Activated CD4-positive, alpha-beta T cell treated with anti-CD3 and anti-CD28 coated beads for 36 hours (primary cell): ENCODE measurements at regions of chr6 and their contacts with region 1.

Region 1: DNA sequence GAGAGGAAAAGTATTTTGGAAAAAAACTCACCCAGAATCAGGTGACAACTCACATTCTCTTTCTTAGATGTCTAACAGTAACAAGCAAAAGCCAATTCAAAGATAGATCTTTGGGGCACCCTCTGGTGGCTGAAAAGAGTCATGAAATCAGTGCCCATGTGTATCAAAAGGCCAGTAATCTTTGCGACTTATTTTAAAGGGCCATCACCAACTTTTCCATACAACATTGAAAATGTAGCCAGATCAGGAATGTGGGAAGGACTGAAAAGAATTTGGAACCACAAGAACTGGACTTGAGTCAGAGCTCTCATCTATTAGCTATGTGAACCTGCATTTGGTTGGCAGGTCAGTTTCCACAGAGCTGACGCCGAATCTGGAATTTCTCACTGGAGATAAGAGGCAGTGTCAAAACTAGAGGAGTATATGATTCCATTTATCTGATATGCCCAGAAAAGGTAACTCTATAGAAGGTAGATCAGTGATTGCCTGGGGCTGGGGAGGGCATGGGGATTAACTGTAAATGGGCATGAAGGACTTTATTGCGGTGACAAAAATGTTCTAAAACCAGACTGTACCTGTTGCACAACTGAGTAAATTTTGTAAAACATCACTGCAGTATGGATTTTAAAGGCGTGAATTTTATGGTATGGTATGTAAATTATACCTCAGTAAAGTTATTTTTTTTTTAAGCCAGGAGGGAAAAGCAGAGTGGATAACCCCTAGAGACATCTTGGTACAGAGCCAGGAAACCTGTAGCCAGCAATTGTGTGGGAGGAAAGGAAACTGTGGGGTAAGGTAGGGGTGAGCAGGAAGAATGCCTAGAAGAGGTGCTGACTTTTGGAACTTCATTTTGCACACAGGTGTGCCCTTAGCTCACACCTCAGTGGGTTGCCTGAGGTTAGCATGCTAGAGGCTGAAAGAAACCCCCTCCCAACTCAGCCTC is 117.1 kb upstream of the ASF1A start:
- DNase-seq: peak; percentile 78
- ATAC-seq: peak; percentile 92
- H3K4me3 Mint-ChIP-seq: no peak overlapping the region
- H3K27ac Mint-ChIP-seq: peak overlapping the region; percentile 10
- H3K4me1 Mint-ChIP-seq: peaks cover 22% of the 10 kb centered on the region
- H3K27me3 Mint-ChIP-seq: no peaks in the 10 kb centered on the region

Region 2: DNA sequence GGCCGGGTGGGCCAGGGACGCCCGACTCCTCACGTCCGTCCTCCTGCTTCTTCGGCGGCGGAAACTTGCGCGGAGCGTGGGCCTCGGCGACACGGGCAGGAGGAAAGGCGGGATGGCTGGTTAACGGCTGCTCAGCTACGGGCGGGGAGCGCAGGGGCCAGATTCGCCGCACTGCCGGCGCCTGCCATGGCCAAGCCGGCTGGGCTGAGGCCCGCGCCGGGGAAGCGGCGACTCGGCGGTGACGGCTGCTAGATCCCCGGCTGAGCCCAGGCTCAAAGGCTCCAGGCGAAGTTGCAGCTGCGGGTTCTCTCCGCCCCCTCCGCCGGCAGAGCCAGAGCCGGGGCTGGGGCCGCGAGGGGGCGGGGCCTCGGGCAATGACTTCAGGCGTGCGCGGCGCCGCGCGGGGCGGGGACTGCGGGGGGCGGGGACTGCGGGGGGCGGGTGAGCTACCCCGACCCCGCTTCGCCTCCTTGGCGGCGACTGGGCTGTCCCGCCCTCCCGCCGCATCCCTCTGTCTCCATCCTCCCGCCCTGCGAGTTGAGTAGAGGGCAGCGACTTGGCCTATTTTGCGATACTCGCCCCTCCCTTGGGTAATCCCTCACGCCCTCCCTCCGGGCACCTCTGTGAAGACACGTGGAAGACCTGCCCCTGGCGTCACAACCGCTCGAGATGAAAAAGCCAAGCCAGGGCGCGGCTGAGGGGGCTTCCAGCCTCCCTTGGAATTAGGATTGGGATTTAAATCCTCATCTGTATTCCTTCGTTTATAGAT is 125.4 kb before region 1 on chr6 and contains the start of gene CEP85L:
- CTCF ChIA-PET with region 1: interaction called, 3 read pairs
- POLR2A ChIA-PET with region 1: no interaction called
- intact Hi-C with region 1: loop called (anchors 1 kb)
- DNase-seq: peak; percentile 96
- ATAC-seq: peak; percentile 93
- H3K4me3 Mint-ChIP-seq: peak within 1 kb of the TSS; percentile 85
- H3K27ac Mint-ChIP-seq: peak within 1 kb of the TSS; percentile 94
- H3K4me1 Mint-ChIP-seq: peaks cover 50% of the 10 kb centered on the region
- H3K27me3 Mint-ChIP-seq: no peaks in the 10 kb centered on the region
- total RNA-seq, gene CEP85L: 29.5 to 29.7 TPM

Region 3: GRCh38 chr6:118724211-118724610 is 52.7 kb before region 1 on chr6:
- CTCF ChIA-PET with region 1: interaction called, 3 read pairs
- POLR2A ChIA-PET with region 1: no interaction called
- intact Hi-C with region 1: loop called (anchors 2 kb)
- DNase-seq: no peak
- ATAC-seq: peak; percentile 37
- H3K4me3 Mint-ChIP-seq: no peak overlapping the region
- H3K27ac Mint-ChIP-seq: peak overlapping the region; percentile 70
- H3K4me1 Mint-ChIP-seq: peaks cover 75% of the 10 kb centered on the region
- H3K27me3 Mint-ChIP-seq: no peaks in the 10 kb centered on the region

Region 4: DNA sequence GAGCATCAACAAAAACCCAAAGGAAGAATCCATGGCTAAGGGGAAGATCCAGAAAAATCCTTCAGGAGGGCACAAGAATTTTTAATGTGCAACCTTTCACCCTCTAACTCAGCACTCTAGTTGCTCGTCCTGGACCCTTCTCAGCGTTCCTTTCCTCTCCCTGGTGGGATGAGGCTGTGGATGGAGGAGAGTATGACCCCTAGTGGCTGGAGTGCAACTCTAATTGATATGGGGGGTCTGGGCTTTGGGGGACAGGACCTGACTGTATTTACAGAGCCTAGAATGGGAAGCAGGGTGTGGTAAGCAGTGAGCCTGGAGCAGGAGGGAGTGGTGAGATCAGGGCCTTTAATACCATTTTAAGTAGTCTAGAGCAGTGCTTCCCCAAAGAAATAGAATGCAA is 41.6 kb before region 1 on chr6:
- CTCF ChIA-PET with region 1: interaction called, 4 read pairs
- POLR2A ChIA-PET with region 1: no interaction called
- intact Hi-C with region 1: loop called in 1 of 2 experiments (anchors 2 kb)
- DNase-seq: no peak
- ATAC-seq: no peak
- H3K4me3 Mint-ChIP-seq: no peak overlapping the region
- H3K27ac Mint-ChIP-seq: peak overlapping the region; percentile 52
- H3K4me1 Mint-ChIP-seq: peaks cover 26% of the 10 kb centered on the region
- H3K27me3 Mint-ChIP-seq: no peaks in the 10 kb centered on the region

Region 5: DNA sequence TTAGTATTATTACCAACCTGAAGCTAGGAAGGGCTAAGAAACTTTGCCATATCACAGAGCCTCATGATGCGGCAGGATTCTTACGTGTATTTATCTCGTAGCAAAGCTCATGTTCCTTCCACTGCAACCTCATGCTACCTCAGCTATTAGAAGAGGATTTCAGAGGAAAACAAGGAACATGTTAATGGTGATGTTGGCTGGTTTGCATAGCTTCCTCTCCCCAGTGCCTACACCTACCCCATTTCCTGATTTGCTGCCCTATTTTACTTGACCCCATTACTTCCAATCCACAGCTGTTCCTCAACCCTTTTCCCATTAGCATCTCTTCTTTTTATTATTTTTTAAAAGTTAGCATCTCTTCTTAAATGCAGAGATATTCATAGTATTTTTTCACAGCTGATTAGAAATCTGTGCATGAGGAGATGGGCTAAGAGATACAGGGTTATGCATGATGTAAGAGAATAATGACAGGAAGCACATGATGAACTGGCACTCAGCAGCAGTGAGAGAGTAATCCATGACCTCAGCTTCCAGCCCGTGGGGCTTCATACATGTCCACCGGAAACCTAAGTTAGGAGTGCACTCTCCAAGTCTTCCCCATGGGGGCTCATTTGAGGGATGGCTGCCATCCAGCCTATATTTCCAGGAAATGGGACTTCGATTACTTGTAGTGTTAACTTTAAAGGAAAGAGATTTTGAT is 11.0 kb after region 1 on chr6:
- CTCF ChIA-PET with region 1: interaction called, 13 read pairs
- POLR2A ChIA-PET with region 1: no interaction called
- intact Hi-C with region 1: no loop called
- DNase-seq: no peak
- ATAC-seq: peak; percentile 40
- H3K4me3 Mint-ChIP-seq: no peak overlapping the region
- H3K27ac Mint-ChIP-seq: peak overlapping the region; percentile 51
- H3K4me1 Mint-ChIP-seq: peaks cover 35% of the 10 kb centered on the region
- H3K27me3 Mint-ChIP-seq: no peaks in the 10 kb centered on the region

Region 6: GRCh38 chr6:118800394-118801071 is 23.7 kb after region 1 on chr6:
- CTCF ChIA-PET with region 1: interaction called, 9 read pairs
- POLR2A ChIA-PET with region 1: no interaction called
- intact Hi-C with region 1: loop called in 1 of 2 experiments (anchors 1 kb)
- DNase-seq: peak; percentile 89
- ATAC-seq: peak; percentile 96
- H3K4me3 Mint-ChIP-seq: no peak overlapping the region
- H3K27ac Mint-ChIP-seq: peak overlapping the region; percentile 7
- H3K4me1 Mint-ChIP-seq: peaks cover 28% of the 10 kb centered on the region
- H3K27me3 Mint-ChIP-seq: no peaks in the 10 kb centered on the region